Sciatic nerve (tissue), 2 donors: ENCODE measurements at regions of chr7 and their contacts with region 1.

Region 1: GRCh38 chr7:83976295-83976694 is 218.3 kb downstream of the SEMA3A start:
- DNase-seq: no peak
- ATAC-seq: no peak

Region 2: GRCh38 chr7:85023045-85023712 is 1046.9 kb after region 1 on chr7:
- intact Hi-C with region 1: loop called (anchors 10 kb)
- DNase-seq: no peak
- ATAC-seq: peak; percentile 46